Activated CD8-positive, alpha-beta T cell treated with anti-CD3 and anti-CD28 coated beads for 36 hours (primary cell): ENCODE measurements at regions of chr4 and their contacts with region 1.

Region 1: DNA sequence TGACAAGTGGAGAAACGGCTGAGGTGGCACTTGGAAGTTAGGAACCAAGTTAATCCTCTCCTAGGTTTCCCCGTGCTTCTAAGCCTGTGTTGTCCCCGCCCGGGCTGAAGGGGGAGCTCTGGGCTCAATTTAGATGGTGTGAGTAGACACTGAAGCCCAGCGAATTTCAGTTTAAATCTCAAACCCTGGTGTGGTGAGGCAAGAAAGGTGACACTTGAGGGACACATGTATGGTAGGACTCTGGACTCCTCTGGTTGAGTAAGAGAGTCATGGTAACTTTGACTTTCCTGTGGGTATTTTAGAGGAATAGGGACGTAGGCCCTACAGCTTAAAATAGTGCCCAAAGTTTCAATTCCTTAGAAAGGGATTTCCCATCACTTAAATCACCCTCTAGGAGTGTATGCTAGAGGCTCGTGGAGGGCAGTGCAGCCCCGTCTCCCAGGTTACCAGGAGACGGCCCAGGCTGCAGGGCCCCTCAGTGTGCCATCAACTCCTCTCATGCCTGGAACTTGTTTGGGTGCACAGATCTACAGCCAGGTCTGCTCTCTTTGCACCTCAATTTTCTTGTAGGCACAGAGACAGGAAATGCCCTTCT is 24.0 kb downstream of the HAND2 start:
- DNase-seq: peak; percentile 74
- ATAC-seq: peak; percentile 85
- H3K4me3 Mint-ChIP-seq: peak overlapping the region; percentile 19
- H3K27ac Mint-ChIP-seq: no peak overlapping the region
- H3K4me1 Mint-ChIP-seq: peaks cover 29% of the 10 kb centered on the region
- H3K27me3 Mint-ChIP-seq: peaks cover 87% of the 10 kb centered on the region
- CTCF ChIP-seq: peak; percentile 85

Region 2: GRCh38 chr4:173494013-173494970 is 11.7 kb before region 1 on chr4:
- CTCF ChIA-PET with region 1: interaction called, 13 read pairs
- POLR2A ChIA-PET with region 1: no interaction called
- intact Hi-C with region 1: no loop called
- DNase-seq: peak; percentile 78
- ATAC-seq: peak; percentile 97
- H3K4me3 Mint-ChIP-seq: peak overlapping the region; percentile 78
- H3K27ac Mint-ChIP-seq: no peak overlapping the region
- H3K4me1 Mint-ChIP-seq: peaks cover 7% of the 10 kb centered on the region
- H3K27me3 Mint-ChIP-seq: peaks cover 26% of the 10 kb centered on the region
- CTCF ChIP-seq: peak; percentile 66

Region 3: DNA sequence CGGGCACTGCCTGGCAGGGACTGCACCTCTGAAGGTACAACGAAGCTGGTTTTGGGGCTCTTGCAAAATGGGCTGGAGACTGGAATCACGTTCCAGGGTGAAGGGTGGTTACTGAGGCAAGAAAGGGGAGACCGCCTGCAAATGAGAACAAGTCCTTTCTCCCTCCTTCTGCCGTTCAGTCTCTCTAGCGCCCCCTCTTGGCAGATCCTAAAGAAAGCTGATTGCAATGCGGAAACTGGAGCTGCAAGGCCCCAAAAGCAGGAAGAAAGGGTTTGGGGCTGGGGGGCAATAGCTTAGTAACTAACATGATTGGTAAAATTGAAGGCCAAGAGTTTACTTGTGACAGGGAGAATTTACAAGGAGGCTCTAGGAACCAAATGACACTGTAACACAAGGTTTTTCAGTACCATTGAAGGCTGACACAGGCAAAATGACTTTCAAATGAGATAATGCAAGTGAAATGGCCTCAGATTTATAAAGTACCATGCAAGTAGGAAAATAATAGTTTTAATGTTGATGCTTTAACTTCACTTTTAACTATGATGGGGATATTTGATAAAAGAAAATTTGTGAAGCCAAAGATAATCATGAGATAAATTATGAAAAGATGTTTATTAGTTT is 246.7 kb after region 1 on chr4:
- CTCF ChIA-PET with region 1: interaction called, 4 read pairs
- POLR2A ChIA-PET with region 1: no interaction called
- intact Hi-C with region 1: loop called (anchors 10 kb)
- DNase-seq: peak; percentile 45
- ATAC-seq: no peak
- H3K4me3 Mint-ChIP-seq: no peak overlapping the region
- H3K27ac Mint-ChIP-seq: no peak overlapping the region
- H3K4me1 Mint-ChIP-seq: no peaks in the 10 kb centered on the region
- H3K27me3 Mint-ChIP-seq: no peaks in the 10 kb centered on the region
- CTCF ChIP-seq: peak; percentile 48

Region 4: GRCh38 chr4:174120446-174121295 is 614.6 kb after region 1 on chr4:
- CTCF ChIA-PET with region 1: interaction called, 5 read pairs
- POLR2A ChIA-PET with region 1: no interaction called
- intact Hi-C with region 1: loop called (anchors 2 kb)
- DNase-seq: peak; percentile 37
- ATAC-seq: peak; percentile 39
- H3K4me3 Mint-ChIP-seq: no peak overlapping the region
- H3K27ac Mint-ChIP-seq: no peak overlapping the region
- H3K4me1 Mint-ChIP-seq: peaks cover 5% of the 10 kb centered on the region
- H3K27me3 Mint-ChIP-seq: peaks cover 20% of the 10 kb centered on the region
- CTCF ChIP-seq: no peak

Region 5: DNA sequence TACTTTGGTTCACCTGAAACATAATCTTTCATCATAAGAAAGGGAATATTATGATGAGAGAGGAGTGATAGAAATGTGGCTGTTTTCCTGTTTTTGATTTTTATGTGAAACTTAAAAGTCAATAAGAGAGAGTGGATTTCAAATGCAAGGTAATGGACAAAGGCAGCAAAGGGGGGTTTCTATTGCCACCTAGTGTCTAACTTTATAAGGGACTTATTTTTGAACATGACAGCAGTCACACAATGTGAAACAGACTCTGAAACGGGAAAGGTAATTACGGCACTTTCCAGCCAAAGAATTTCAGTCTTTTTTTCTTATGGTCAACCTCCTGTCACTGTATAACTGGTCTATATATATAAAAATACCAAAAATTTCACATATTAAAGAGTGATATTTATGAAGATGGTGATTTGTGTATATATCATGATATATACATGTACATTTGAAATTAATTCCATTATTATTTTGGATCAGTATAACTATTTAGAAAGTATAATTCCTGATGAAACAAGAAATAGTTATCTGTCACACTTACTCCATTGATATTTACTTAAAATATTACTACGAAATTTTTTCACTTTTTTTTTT is 650.3 kb after region 1 on chr4:
- CTCF ChIA-PET with region 1: interaction called, 3 read pairs
- POLR2A ChIA-PET with region 1: interaction called, 3 read pairs
- intact Hi-C with region 1: loop called (anchors 10 kb)
- DNase-seq: no peak
- ATAC-seq: peak; percentile 58
- H3K4me3 Mint-ChIP-seq: no peak overlapping the region
- H3K27ac Mint-ChIP-seq: no peak overlapping the region
- H3K4me1 Mint-ChIP-seq: no peaks in the 10 kb centered on the region
- H3K27me3 Mint-ChIP-seq: peaks cover 15% of the 10 kb centered on the region
- CTCF ChIP-seq: peak; percentile 66